ENCODE measurements at regions of chr7 and their contacts with region 1.

Region 1: DNA sequence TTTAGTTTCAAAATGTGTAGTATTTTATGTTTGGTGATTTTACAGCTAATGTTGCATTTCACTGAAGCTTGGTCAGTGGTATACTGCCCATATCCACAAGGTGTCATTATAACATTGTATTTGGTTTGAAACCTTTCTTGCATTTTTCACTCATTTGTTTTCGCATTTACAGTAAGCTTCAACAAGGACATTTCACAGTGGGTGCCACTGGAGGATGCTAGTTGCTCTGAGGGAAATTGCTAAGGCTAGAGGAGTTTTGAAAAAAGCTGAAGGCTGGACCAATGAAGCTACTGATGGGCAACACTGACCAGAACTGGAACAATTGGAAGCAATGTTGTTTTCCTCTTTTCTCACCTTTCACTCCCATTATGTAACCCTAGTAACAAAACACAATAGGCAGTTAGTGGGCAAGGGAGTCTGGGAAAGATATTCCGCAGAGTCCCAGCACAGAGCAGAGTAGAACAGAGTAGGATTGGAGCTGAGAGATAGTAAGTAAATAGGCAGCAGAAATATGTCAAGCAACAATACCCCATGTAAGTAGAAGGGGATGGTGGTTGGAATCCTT is 23.6 kb upstream of the SRI start:
- DNase-seq: peak in 4 of 9 donors; percentile 4 to 13 (median 12)
- ATAC-seq: peak; percentile 77
- H3K4me3 ChIP-seq: no peak overlapping the region
- H3K4me3 Mint-ChIP-seq: no peak overlapping the region
- H3K27ac ChIP-seq: no peak overlapping the region
- H3K27ac Mint-ChIP-seq: no peak overlapping the region
- H3K4me1 ChIP-seq: no peaks in the 10 kb centered on the region
- H3K4me1 Mint-ChIP-seq: no peaks in the 10 kb centered on the region
- H3K27me3 ChIP-seq: no peaks in the 10 kb centered on the region
- H3K27me3 Mint-ChIP-seq: peaks cover 0 to 23% (median 13%) of the 10 kb centered on the region in 5 donors

Region 2: GRCh38 chr7:87876040-87876868 is 367.2 kb before region 1 on chr7 and contains the starts of genes DBF4 and SLC25A40:
- CTCF ChIA-PET with region 1: no interaction called
- POLR2A ChIA-PET with region 1: no interaction called
- intact Hi-C with region 1: no loop called
- DNase-seq: peak; percentile 88 to 98 (median 95)
- ATAC-seq: peak; percentile 95
- H3K4me3 ChIP-seq: peak within 1 kb of the TSS; percentile 93
- H3K4me3 Mint-ChIP-seq: peak within 1 kb of the TSS; percentile 69 to 96 (median 93)
- H3K27ac ChIP-seq: peak within 1 kb of the TSS; percentile 92
- H3K27ac Mint-ChIP-seq: peak within 1 kb of the TSS; percentile 82 to 98 (median 97)
- H3K4me1 ChIP-seq: peaks cover 6 to 13% of the 10 kb centered on the region in 2 donors
- H3K4me1 Mint-ChIP-seq: peaks cover 27 to 64% (median 54%) of the 10 kb centered on the region in 7 donors
- H3K27me3 ChIP-seq: no peaks in the 10 kb centered on the region
- H3K27me3 Mint-ChIP-seq: no peaks in the 10 kb centered on the region
- total RNA-seq, gene DBF4: 31.2 to 46.5 (median 38.4) TPM
- total RNA-seq, gene SLC25A40: 15.2 to 50.2 (median 27.5) TPM

Region 3: DNA sequence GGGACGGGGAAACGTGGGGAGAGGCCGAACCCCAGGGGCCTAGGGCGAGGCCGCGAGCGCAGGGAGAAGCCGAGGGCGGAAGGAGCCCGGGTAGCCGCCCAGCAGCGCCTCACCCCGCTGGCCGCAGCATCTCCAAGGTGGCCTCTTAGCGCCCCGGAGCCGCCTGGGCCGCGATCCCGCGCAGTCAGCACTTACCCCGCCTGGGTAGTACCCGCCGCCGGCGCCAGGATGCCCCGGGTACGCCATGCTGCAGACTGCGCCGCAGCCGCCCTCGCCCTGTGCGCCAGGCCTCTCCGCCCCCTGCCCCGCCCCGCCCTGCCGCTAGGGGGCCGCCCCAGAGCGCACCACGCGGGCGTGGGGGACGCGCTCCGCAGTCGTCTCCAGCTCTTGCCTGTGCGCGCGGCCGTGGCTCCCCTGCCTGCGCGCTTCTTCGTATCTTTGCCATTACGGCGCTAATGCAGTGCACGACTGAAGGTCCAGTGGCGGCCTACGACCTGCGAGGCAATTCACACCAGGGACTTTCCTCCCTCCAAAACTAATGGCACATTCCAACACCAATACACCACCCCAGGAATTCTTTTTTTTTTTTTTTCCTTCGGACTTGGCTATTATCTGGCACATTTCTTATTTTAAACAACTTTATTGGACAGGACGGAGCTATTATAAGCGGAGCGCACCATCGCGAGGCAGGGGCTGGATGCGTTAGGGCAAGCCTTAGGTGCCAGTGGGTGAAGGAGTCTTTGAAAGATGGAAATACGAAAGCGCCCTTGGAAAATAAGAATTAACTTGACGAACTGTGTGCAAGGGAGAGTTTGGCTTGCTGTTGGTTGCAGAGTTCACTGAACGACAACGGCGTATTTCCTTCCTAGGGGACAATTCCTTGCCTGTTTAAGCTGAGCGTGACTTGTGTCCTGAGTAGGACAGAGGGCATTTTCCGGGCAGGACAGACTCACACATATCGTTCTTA is 23.4 kb before region 1 on chr7 and contains the start of gene SRI:
- CTCF ChIA-PET with region 1: interaction called, 3 read pairs
- POLR2A ChIA-PET with region 1: no interaction called
- intact Hi-C with region 1: loop called in 1 of 2 experiments (anchors 2 kb)
- DNase-seq: peak; percentile 85 to 95 (median 93)
- ATAC-seq: peak; percentile 98
- H3K4me3 ChIP-seq: peak within 1 kb of the TSS; percentile 97
- H3K4me3 Mint-ChIP-seq: peak within 1 kb of the TSS; percentile 95 to 99 (median 96)
- H3K27ac ChIP-seq: peak within 1 kb of the TSS; percentile 86
- H3K27ac Mint-ChIP-seq: peak within 1 kb of the TSS; percentile 90 to 99 (median 94)
- H3K4me1 ChIP-seq: peaks cover 15 to 18% of the 10 kb centered on the region in 2 donors
- H3K4me1 Mint-ChIP-seq: peaks cover 13 to 42% (median 34%) of the 10 kb centered on the region in 7 donors
- H3K27me3 ChIP-seq: peaks cover 0 to 4% of the 10 kb centered on the region in 2 donors
- H3K27me3 Mint-ChIP-seq: peaks cover 0 to 8% (median 0%) of the 10 kb centered on the region in 5 donors
- total RNA-seq, gene SRI: 39.9 to 131 (median 60.0) TPM

Region 4: GRCh38 chr7:88268863-88269262 is 25.4 kb after region 1 on chr7:
- CTCF ChIA-PET with region 1: no interaction called
- POLR2A ChIA-PET with region 1: no interaction called
- intact Hi-C with region 1: no loop called
- DNase-seq: no peak
- ATAC-seq: peak; percentile 63
- H3K4me3 ChIP-seq: no peak overlapping the region
- H3K4me3 Mint-ChIP-seq: no peak overlapping the region
- H3K27ac ChIP-seq: no peak overlapping the region
- H3K27ac Mint-ChIP-seq: no peak overlapping the region
- H3K4me1 ChIP-seq: no peaks in the 10 kb centered on the region
- H3K4me1 Mint-ChIP-seq: no peaks in the 10 kb centered on the region
- H3K27me3 ChIP-seq: no peaks in the 10 kb centered on the region
- H3K27me3 Mint-ChIP-seq: peaks cover 0 to 12% (median 10%) of the 10 kb centered on the region in 5 donors

Region 5: DNA sequence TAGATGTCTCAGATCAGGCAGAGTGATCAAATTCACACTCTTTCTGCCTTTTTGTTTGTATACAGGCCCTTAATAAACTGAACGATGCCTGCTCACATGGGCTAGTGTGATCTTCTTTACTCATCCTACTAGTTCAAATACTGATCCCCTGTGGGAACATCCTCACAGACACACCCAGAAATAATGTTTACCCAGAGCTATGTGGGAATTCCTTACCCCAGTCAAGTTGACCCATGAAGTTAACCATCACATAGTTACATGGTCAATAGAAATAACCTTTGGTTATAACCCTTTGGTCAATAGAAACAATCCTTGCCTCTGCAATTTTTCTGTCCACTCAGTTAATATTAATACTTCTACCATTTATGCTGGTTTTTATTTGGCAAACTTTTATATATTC is 482.3 kb after region 1 on chr7:
- CTCF ChIA-PET with region 1: no interaction called
- POLR2A ChIA-PET with region 1: no interaction called
- intact Hi-C with region 1: no loop called
- DNase-seq: no peak
- ATAC-seq: no peak
- H3K4me3 ChIP-seq: no peak overlapping the region
- H3K4me3 Mint-ChIP-seq: no peak overlapping the region
- H3K27ac ChIP-seq: no peak overlapping the region
- H3K27ac Mint-ChIP-seq: no peak overlapping the region
- H3K4me1 ChIP-seq: no peaks in the 10 kb centered on the region
- H3K4me1 Mint-ChIP-seq: no peaks in the 10 kb centered on the region
- H3K27me3 ChIP-seq: no peaks in the 10 kb centered on the region
- H3K27me3 Mint-ChIP-seq: no peaks in the 10 kb centered on the region

Region 6: GRCh38 chr7:88835147-88835728 is 591.8 kb after region 1 on chr7:
- CTCF ChIA-PET with region 1: no interaction called
- POLR2A ChIA-PET with region 1: no interaction called
- intact Hi-C with region 1: loop called (anchors 2 to 5 kb)
- DNase-seq: peak in 1 of 9 donors; percentile 2
- ATAC-seq: no peak
- H3K4me3 ChIP-seq: no peak overlapping the region
- H3K4me3 Mint-ChIP-seq: no peak overlapping the region
- H3K27ac ChIP-seq: no peak overlapping the region
- H3K27ac Mint-ChIP-seq: no peak overlapping the region
- H3K4me1 ChIP-seq: no peaks in the 10 kb centered on the region
- H3K4me1 Mint-ChIP-seq: no peaks in the 10 kb centered on the region
- H3K27me3 ChIP-seq: no peaks in the 10 kb centered on the region
- H3K27me3 Mint-ChIP-seq: no peaks in the 10 kb centered on the region